MCF 10A (cell line): ENCODE measurements at regions of chr11 and their contacts with region 1.

Region 1: DNA sequence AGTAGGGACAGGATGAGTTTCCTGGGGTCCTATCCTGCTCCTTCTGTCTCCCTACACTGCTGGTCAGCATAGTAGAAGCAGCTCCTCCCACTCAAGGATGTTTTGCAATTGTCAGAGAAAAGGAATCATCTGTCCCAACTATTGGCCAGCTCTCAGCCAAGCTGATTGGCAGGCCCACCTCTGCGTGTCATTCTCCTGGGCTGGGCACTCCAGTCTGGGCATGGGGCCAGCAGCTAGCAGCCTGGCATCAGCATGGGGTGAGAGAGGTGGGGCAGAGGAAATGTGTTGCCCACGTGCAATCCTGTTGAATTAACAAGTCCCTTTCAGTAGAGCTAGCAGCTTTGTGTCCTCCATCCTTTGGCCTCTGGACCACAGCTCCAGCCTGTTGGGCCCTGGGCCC is 14.1 kb downstream of the ANKK1 start:
- DNase-seq: peak; percentile 99
- H3K4me3 Mint-ChIP-seq: no peak overlapping the region
- H3K27ac Mint-ChIP-seq: peak overlapping the region; percentile 39
- H3K4me1 Mint-ChIP-seq: peaks cover 44% of the 10 kb centered on the region
- H3K27me3 Mint-ChIP-seq: no peaks in the 10 kb centered on the region
- CTCF ChIP-seq: no peak

Region 2: DNA sequence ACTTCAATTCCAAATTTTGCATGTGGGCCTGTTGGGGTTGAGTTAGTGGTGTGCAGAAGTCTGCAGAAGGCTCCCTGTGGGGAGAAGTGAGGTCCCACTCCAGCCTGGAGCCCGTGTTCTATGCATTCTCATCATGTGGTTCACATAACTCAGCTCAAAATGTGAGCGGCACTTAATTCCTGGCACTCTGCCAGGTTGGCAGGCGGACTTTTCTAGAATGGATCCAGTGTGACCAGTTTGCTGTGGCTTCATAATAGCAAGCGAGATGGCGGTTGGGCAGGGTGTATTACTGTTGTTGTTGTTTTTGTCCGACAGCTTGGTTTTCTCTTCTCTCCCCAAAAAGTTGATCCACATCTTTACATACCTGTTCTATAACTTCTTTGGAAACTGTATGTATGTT is 234.1 kb before region 1 on chr11:
- CTCF ChIA-PET with region 1: no interaction called
- POLR2A ChIA-PET with region 1: no interaction called
- intact Hi-C with region 1: no loop called
- DNase-seq: no peak
- H3K4me3 Mint-ChIP-seq: no peak overlapping the region
- H3K27ac Mint-ChIP-seq: no peak overlapping the region
- H3K4me1 Mint-ChIP-seq: no peaks in the 10 kb centered on the region
- H3K27me3 Mint-ChIP-seq: no peaks in the 10 kb centered on the region
- CTCF ChIP-seq: no peak

Region 3: DNA sequence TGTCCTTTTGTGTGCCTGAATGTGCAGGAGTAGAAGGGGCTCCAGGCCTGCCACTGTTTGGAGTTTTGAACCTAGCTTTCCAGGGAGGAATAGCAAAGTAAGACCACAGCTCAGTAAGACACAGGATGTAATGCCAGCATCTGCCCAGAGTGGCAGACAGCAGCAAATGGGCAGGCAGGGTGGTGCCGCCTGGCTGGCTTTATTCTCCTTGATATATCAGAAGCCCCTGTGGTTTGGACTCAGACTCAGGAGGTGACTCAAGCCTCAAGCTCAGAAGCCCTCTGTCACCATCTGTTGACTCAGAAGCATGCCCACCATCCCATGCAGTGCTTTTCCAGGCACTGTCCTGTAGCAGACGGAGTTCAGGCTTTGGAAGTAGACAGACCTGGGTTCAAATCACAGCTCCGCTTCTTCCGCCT is 160.1 kb before region 1 on chr11:
- CTCF ChIA-PET with region 1: no interaction called
- POLR2A ChIA-PET with region 1: no interaction called
- intact Hi-C with region 1: no loop called
- DNase-seq: no peak
- H3K4me3 Mint-ChIP-seq: no peak overlapping the region
- H3K27ac Mint-ChIP-seq: no peak overlapping the region
- H3K4me1 Mint-ChIP-seq: no peaks in the 10 kb centered on the region
- H3K27me3 Mint-ChIP-seq: peaks cover 41% of the 10 kb centered on the region
- CTCF ChIP-seq: no peak

Region 4: DNA sequence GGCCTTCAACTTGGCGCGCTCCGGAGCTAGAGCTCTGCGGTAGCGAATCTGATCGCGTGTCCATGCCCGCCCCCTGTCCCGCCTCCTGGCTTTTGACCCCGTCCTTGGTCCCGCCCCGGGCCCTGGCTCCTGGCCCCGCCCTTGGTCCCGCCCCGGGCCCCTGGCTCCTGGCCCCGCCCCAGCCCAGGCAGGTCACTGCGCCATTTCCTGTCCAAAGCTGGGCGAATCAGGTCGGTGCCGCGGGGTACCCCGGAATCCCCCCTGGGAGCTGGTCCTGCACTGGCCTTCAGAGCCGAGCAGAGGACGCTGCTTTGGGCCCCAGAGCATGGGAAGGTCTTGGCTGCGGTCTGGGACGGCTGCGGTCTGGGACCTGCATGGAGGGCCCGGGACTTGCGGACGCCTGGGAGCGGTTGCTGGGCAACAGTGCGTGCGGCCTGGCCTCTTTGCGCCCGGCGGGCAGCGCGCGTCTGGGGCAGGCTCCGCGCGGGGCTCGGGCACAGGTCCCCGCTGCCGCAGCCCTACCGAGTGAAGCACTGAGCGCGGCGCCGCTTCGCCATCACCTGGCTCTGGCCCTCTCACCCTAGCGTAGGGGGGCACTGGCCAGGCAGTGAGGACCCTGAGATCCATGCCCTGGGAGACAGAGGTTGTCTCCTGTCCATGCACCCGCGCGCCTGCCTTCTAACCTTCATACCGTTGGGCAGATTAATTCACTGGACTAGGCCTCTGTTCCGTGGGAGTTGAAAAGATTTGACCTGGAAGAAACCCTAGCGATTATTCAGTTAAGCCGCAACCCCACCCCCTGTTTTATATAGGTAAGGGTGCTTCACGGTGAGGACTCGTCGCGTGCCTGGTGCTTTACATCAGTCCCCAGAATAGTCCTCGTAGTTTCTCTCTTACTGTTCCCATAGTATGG is 87.1 kb before region 1 on chr11 and contains the start of gene TTC12:
- CTCF ChIA-PET with region 1: interaction called, 4 read pairs
- POLR2A ChIA-PET with region 1: interaction called, 3 read pairs
- intact Hi-C with region 1: loop called (anchors 5 kb)
- DNase-seq: peak; percentile 92
- H3K4me3 Mint-ChIP-seq: peak within 1 kb of the TSS; percentile 80
- H3K27ac Mint-ChIP-seq: peak within 1 kb of the TSS; percentile 87
- H3K4me1 Mint-ChIP-seq: peaks cover 19% of the 10 kb centered on the region
- H3K27me3 Mint-ChIP-seq: no peaks in the 10 kb centered on the region
- CTCF ChIP-seq: no peak
- total RNA-seq, gene TTC12: 30.5 and 41.3 TPM in 2 replicates

Region 5: DNA sequence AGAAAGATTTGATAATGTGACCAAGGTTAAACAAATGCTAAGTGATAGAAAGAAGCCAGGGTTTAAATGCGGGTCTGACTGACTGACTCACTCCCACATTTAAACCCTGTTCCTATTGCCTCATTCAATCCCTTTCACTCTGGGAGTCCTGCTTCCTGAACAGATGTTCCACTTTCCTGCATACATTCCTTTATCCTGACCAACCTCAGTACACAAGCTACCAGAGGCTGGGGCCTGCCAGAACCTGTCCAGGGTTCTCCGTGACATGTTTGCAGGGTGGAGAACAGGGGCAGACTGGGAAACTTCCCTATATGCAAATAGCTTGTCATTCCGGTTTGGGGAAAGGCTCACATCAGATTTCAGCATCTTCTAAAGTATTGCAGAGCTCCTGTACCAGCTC is 17.2 kb before region 1 on chr11:
- CTCF ChIA-PET with region 1: no interaction called
- POLR2A ChIA-PET with region 1: interaction called, 18 read pairs
- intact Hi-C with region 1: loop called (anchors 1 kb)
- DNase-seq: peak; percentile 98
- H3K4me3 Mint-ChIP-seq: no peak overlapping the region
- H3K27ac Mint-ChIP-seq: peak overlapping the region; percentile 93
- H3K4me1 Mint-ChIP-seq: peaks cover 20% of the 10 kb centered on the region
- H3K27me3 Mint-ChIP-seq: no peaks in the 10 kb centered on the region
- CTCF ChIP-seq: no peak

Region 6: DNA sequence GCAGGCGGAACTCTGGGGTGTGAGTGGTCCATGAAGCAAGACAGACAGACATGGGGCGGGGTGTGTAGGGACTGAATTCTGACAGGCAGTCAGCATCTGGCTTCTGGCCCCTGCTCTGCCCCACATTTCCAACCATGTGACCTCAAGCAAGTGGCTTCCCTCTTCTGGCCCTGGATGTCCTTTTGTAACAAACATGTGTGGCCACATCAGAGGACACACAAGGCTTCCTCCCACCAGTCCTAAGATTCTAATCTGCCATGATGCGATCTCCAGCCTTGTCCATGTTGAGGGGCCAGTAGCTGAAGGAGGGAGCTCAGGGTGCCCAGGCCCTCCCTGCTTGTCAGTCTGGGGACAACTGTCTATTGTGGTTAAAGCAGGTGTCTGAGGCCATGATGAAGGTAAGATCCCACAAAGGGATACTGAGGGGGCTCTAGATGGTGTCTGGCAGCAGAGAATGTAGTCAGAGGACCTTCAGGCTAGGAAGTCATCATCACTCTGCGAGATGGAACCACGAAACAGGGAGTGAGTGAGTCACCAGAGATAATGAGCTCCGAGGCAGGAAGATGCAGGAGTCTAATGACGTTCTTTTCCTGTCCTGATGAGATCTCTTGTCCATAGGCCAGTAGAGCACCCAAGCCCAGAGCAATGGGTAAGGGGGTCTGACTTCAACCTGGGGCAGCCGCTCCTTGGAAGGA is 46.1 kb after region 1 on chr11:
- CTCF ChIA-PET with region 1: interaction called, 3 read pairs
- POLR2A ChIA-PET with region 1: interaction called, 16 read pairs
- intact Hi-C with region 1: loop called (anchors 5 kb)
- DNase-seq: peak; percentile 81
- H3K4me3 Mint-ChIP-seq: no peak overlapping the region
- H3K27ac Mint-ChIP-seq: peak overlapping the region; percentile 75
- H3K4me1 Mint-ChIP-seq: peaks cover 34% of the 10 kb centered on the region
- H3K27me3 Mint-ChIP-seq: no peaks in the 10 kb centered on the region
- CTCF ChIP-seq: no peak

Region 7: GRCh38 chr11:113532697-113533424 is 131.1 kb after region 1 on chr11:
- CTCF ChIA-PET with region 1: interaction called, 11 read pairs
- POLR2A ChIA-PET with region 1: no interaction called
- intact Hi-C with region 1: no loop called
- DNase-seq: peak; percentile 77
- H3K4me3 Mint-ChIP-seq: no peak overlapping the region
- H3K27ac Mint-ChIP-seq: no peak overlapping the region
- H3K4me1 Mint-ChIP-seq: peaks cover 20% of the 10 kb centered on the region
- H3K27me3 Mint-ChIP-seq: no peaks in the 10 kb centered on the region
- CTCF ChIP-seq: peak; percentile 89

Region 8: GRCh38 chr11:113632981-113633380 is 231.3 kb after region 1 on chr11:
- CTCF ChIA-PET with region 1: no interaction called
- POLR2A ChIA-PET with region 1: no interaction called
- intact Hi-C with region 1: no loop called
- DNase-seq: peak; percentile 6
- H3K4me3 Mint-ChIP-seq: no peak overlapping the region
- H3K27ac Mint-ChIP-seq: no peak overlapping the region
- H3K4me1 Mint-ChIP-seq: no peaks in the 10 kb centered on the region
- H3K27me3 Mint-ChIP-seq: peaks cover 16% of the 10 kb centered on the region
- CTCF ChIP-seq: no peak